ENCODE measurements at regions of chr2 and their contacts with region 1.

Region 1: GRCh38 chr2:138107292-138107691 is 143.0 kb downstream of the HNMT start:
- DNase-seq: no peak
- H3K4me3 ChIP-seq: no peak overlapping the region
- H3K4me3 Mint-ChIP-seq: no peak overlapping the region
- H3K27ac Mint-ChIP-seq: no peak overlapping the region
- H3K4me1 ChIP-seq: peaks cover 68% of the 10 kb centered on the region
- H3K4me1 Mint-ChIP-seq: peaks cover 42% of the 10 kb centered on the region
- H3K27me3 ChIP-seq: no peaks in the 10 kb centered on the region
- H3K27me3 Mint-ChIP-seq: no peaks in the 10 kb centered on the region
- CTCF ChIP-seq: no peak

Region 2: GRCh38 chr2:137747509-137747908 is 359.8 kb before region 1 on chr2:
- CTCF ChIA-PET with region 1: no interaction called
- POLR2A ChIA-PET with region 1: no interaction called
- intact Hi-C with region 1: no loop called
- DNase-seq: no peak
- H3K4me3 ChIP-seq: no peak overlapping the region
- H3K4me3 Mint-ChIP-seq: no peak overlapping the region
- H3K27ac Mint-ChIP-seq: no peak overlapping the region
- H3K4me1 ChIP-seq: no peaks in the 10 kb centered on the region
- H3K4me1 Mint-ChIP-seq: no peaks in the 10 kb centered on the region
- H3K27me3 ChIP-seq: no peaks in the 10 kb centered on the region
- H3K27me3 Mint-ChIP-seq: no peaks in the 10 kb centered on the region
- CTCF ChIP-seq: no peak

Region 3: GRCh38 chr2:138035631-138036105 is 71.6 kb before region 1 on chr2:
- CTCF ChIA-PET with region 1: no interaction called
- POLR2A ChIA-PET with region 1: no interaction called
- intact Hi-C with region 1: loop called (anchors 2 kb)
- DNase-seq: peak; percentile 48 to 54
- H3K4me3 ChIP-seq: no peak overlapping the region
- H3K4me3 Mint-ChIP-seq: peak overlapping the region; percentile 12
- H3K27ac Mint-ChIP-seq: peak overlapping the region; percentile 79
- H3K4me1 ChIP-seq: peaks cover 42% of the 10 kb centered on the region
- H3K4me1 Mint-ChIP-seq: peaks cover 30% of the 10 kb centered on the region
- H3K27me3 ChIP-seq: no peaks in the 10 kb centered on the region
- H3K27me3 Mint-ChIP-seq: no peaks in the 10 kb centered on the region
- CTCF ChIP-seq: no peak

Region 4: GRCh38 chr2:138071720-138072719 is 35.3 kb before region 1 on chr2:
- CTCF ChIA-PET with region 1: no interaction called
- POLR2A ChIA-PET with region 1: no interaction called
- intact Hi-C with region 1: loop called (anchors 1 kb)
- DNase-seq: peak; percentile 65 to 69
- H3K4me3 ChIP-seq: no peak overlapping the region
- H3K4me3 Mint-ChIP-seq: peak overlapping the region; percentile 42
- H3K27ac Mint-ChIP-seq: peak overlapping the region; percentile 24
- H3K4me1 ChIP-seq: peaks cover 23% of the 10 kb centered on the region
- H3K4me1 Mint-ChIP-seq: peaks cover 7% of the 10 kb centered on the region
- H3K27me3 ChIP-seq: no peaks in the 10 kb centered on the region
- H3K27me3 Mint-ChIP-seq: no peaks in the 10 kb centered on the region
- CTCF ChIP-seq: no peak

Region 5: DNA sequence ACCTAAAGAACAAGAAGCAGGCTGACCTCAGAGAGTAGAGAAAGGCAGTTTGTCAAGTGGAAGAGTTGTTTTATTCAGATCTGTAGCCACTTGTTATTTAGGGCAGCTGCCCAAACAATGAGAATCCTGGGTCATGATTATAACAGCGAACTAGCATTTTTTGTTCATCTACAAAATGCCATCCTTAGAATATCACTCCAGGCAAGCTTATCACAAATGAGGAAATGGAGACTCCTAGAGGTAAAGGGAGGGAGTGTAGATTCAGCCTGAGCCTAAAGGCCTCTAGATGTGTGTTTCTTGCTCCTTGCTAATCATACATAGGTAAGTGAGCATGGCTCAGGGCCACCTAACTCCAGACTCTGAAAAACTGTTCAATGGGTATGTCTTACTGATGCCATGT is 17.0 kb before region 1 on chr2:
- CTCF ChIA-PET with region 1: no interaction called
- POLR2A ChIA-PET with region 1: no interaction called
- intact Hi-C with region 1: loop called (anchors 1 kb)
- DNase-seq: peak in 1 of 2 experiments; percentile 36
- H3K4me3 ChIP-seq: no peak overlapping the region
- H3K4me3 Mint-ChIP-seq: no peak overlapping the region
- H3K27ac Mint-ChIP-seq: peak overlapping the region; percentile 11
- H3K4me1 ChIP-seq: peaks cover 10% of the 10 kb centered on the region
- H3K4me1 Mint-ChIP-seq: no peaks in the 10 kb centered on the region
- H3K27me3 ChIP-seq: no peaks in the 10 kb centered on the region
- H3K27me3 Mint-ChIP-seq: no peaks in the 10 kb centered on the region
- CTCF ChIP-seq: peak in 1 of 2 experiments; percentile 42

Region 6: GRCh38 chr2:138192096-138192495 is 84.8 kb after region 1 on chr2:
- CTCF ChIA-PET with region 1: no interaction called
- POLR2A ChIA-PET with region 1: no interaction called
- intact Hi-C with region 1: loop called (anchors 5 kb)
- DNase-seq: no peak
- H3K4me3 ChIP-seq: no peak overlapping the region
- H3K4me3 Mint-ChIP-seq: no peak overlapping the region
- H3K27ac Mint-ChIP-seq: no peak overlapping the region
- H3K4me1 ChIP-seq: peaks cover 19% of the 10 kb centered on the region
- H3K4me1 Mint-ChIP-seq: peaks cover 21% of the 10 kb centered on the region
- H3K27me3 ChIP-seq: no peaks in the 10 kb centered on the region
- H3K27me3 Mint-ChIP-seq: no peaks in the 10 kb centered on the region
- CTCF ChIP-seq: no peak

Region 7: DNA sequence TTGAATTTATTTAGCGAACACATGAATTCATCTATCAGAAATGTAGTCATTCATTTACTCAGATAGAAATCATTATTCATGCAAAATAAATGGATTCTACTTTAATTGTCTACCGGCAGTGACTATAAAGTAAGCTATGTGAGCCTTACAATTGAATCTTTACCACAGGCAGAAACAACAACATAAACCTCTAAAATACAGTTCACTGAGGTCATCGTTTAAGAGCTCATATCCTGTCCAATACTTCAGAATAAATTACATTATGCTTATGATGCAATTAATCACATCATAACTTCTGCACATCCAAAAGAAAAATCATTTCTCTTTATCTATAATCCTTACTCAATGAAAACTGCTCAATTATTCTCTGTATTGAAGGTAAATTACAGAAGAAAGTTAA is 101.7 kb after region 1 on chr2:
- CTCF ChIA-PET with region 1: no interaction called
- POLR2A ChIA-PET with region 1: no interaction called
- intact Hi-C with region 1: no loop called
- DNase-seq: no peak
- H3K4me3 ChIP-seq: no peak overlapping the region
- H3K4me3 Mint-ChIP-seq: no peak overlapping the region
- H3K27ac Mint-ChIP-seq: no peak overlapping the region
- H3K4me1 ChIP-seq: no peaks in the 10 kb centered on the region
- H3K4me1 Mint-ChIP-seq: no peaks in the 10 kb centered on the region
- H3K27me3 ChIP-seq: no peaks in the 10 kb centered on the region
- H3K27me3 Mint-ChIP-seq: no peaks in the 10 kb centered on the region
- CTCF ChIP-seq: no peak